Posterior cingulate gyrus (tissue), 11 donors: ENCODE measurements at regions of chr20 and their contacts with region 1.

Region 1: GRCh38 chr20:60210779-60211617 is 252.8 kb downstream of the CDH26 start:
- DNase-seq: peak; percentile 51 to 96 (median 80)

Region 2: GRCh38 chr20:59948828-59949720 is 261.9 kb before region 1 on chr20:
- intact Hi-C with region 1: loop called (anchors 5 kb)
- DNase-seq: no peak

Region 3: GRCh38 chr20:60057123-60057801 is 153.7 kb before region 1 on chr20:
- intact Hi-C with region 1: loop called (anchors 2 kb)
- DNase-seq: peak; percentile 39 to 95 (median 74)

Region 4: GRCh38 chr20:60294632-60295031 is 83.6 kb after region 1 on chr20:
- intact Hi-C with region 1: no loop called
- DNase-seq: no peak

Region 5: GRCh38 chr20:60365056-60365666 is 154.2 kb after region 1 on chr20:
- intact Hi-C with region 1: loop called (anchors 5 kb)
- DNase-seq: no peak

Region 6: DNA sequence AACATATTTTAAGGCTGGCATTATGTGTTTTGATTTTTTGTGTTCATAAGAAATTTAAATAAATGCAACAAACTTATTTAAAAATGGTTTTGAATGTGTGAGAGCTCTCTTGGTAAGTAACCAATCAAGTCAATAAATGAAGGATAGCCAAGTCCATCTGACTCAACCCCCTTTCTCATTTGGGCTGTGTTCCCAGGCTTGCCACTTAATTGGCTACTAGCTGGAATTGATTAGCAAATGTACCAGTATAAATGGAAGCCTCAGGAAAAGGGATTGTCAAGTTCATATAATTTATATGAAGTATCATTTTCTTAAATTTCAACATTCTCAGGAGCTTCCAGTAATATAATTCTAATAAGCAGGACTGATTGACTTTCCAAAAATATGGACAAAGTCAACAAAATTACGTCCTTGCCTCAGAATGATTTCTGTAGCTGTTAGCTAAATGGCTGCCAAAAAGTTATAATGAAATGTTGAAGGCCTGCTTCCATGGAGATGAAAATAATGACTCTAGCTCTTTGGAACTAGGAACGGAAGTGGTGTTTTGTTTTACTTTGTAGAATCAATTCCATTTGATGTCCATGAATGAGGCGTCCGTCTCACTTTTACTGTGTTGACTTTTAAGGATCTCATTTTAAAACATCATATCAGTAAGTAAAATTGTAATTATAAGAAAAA is 362.1 kb after region 1 on chr20:
- intact Hi-C with region 1: no loop called
- DNase-seq: no peak

Region 7: DNA sequence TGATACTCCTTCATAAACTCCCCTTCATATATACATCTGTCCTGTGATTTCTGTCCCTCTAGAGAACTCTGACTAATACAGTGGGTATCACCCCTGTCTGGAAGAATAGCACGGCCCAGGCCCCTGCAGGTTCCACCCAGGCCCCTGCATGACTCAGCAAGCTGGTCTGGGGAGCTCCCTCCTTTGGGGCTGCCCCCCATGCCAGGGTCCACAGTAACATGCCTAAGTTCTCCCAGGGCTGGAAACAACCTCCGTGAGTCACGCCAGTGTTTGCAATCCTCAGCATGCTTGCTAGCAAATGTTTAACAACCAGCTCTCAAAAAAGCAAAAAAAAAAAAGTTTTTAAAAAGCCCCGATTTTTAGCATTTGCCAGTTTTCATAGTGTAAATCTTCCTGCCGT is 906.7 kb after region 1 on chr20:
- intact Hi-C with region 1: loop called (anchors 5 kb)
- DNase-seq: peak in 2 of 10 donors; percentile 42 to 47

Region 8: GRCh38 chr20:61234803-61235113 is 1023.8 kb after region 1 on chr20:
- intact Hi-C with region 1: loop called (anchors 1 kb)
- DNase-seq: no peak

Region 9: GRCh38 chr20:61896058-61896961 is 1685.3 kb after region 1 on chr20:
- intact Hi-C with region 1: loop called (anchors 10 kb)
- DNase-seq: peak in 8 of 10 donors; percentile 57 to 93 (median 64)